GM18951 (cell line): ENCODE measurements at regions of chr15 and their contacts with region 1.

Region 1: DNA sequence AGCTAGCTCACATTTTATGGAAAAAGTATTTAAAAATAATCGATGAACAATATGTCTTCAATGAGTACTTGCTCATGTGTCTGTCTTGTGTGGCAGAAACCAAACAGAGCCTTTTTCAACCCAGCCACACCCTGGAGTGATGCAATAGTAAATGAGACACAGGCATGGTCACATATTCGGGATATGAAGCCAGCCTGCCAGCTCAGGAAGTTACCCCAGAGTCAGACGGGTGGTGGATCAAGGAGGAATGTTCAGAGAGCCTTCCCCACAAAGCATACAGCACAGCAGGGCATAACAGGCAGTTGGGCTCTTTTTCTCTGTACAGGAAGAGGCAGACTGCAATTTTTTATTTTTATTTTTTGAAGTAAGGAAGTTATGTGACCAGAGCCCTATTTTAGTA is 27.3 kb downstream of the LARP6 start:
- POLR2A ChIP-seq: no peak

Region 2: GRCh38 chr15:71448688-71449114 is 622.1 kb after region 1 on chr15:
- in situ Hi-C with region 1: loop called (anchors 25 kb)
- POLR2A ChIP-seq: no peak